Activated T-helper 1 cell treated with anti-CD3 and anti-CD28 coated beads, Interleukin-12 subunit alpha, Interleukin-12 subunit beta, Interleukin-2, Interleukin-4 antibody, amounts not matched to agents 30 ng/mL and 10 ng/mL and 1 ng/mL, durations not matched to agents 14 hours and 24 hours and 36 hours (primary cell): ENCODE measurements at regions of chr17 and their contacts with region 1.

Region 1: DNA sequence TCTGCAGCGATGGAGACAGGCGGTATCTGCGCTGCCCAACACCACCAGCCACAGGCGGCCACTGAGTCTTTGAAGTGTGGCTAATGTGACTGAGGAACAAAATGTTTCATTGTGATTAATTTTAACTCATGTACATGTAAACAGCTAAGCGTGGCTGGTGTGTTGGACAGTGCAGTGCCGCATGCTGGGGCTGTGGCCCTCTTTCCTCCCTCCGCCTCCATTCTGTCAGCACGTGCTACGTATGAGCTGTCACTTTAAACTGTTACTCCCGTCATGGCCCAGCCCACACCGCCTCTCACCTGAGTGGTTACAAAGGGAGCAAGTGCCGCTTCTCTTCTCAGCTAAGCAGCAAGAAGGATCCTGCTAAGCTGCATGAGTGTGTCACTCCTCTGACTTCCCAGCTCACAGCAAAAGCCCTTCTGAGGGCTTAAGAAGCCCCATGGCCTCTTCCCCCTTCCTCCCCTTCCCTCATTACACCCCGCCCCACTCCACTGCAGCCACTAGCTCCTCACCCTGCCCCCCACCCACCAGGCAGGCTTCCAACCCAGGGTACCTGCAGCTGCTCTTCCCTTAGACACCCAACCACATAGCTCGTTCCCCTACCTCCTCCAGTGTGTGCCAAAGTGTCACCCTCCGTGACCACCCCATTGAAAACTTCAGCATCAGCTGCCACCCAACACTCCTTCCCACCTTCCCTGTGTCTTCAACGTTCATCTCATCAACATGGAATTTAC is 15.0 kb downstream of the HASPIN start:
- DNase-seq: peak; percentile 49
- H3K4me3 Mint-ChIP-seq: peak overlapping the region; percentile 21
- H3K27ac Mint-ChIP-seq: peak overlapping the region; percentile 67
- H3K4me1 Mint-ChIP-seq: peaks cover 50% of the 10 kb centered on the region
- H3K27me3 Mint-ChIP-seq: peaks cover 2% of the 10 kb centered on the region

Region 2: DNA sequence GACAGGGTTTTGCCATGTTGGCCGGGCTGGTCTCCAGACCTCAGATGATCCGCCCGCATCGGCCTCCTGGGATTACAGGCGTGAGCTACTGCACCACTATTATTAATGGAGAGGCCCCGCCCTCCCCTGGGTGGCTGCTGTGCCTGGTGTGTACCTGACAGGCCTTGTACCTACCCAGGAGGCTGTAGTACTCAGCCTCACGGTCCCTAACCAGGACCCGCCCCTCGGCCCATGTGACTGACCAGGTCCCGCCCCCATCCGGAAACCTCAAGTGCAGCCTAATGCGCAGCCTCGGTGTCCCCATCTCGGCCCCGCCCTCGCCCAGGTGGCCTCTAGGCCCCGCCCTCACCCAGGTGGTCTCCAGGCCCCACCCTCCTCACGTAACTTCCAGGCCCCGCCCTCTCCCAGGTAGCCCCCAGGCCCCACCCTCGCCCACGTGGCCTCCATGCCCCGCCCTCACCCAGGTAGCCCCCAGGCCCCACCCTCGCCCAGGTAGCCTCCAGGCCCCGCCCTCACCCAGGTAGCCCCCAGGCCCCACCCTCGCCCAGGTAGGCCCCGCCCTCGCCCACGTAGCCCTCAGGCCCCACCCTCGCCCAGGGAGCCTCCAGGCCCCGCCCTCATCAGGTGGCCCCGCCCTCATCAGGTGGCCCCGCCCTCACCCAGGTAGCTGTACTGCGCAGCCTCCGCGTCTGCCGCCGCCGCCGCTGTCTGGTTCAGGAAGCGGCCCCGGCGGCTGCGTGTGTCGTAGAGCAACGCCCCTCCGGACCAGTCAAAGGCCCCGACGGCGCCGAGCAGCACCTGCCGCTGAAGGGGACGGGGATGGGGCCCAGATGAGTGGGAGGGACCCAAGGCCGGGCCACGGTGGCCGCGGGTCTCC is 16.0 kb after region 1 on chr17:
- intact Hi-C with region 1: loop called (anchors 2 kb)
- DNase-seq: peak; percentile 40
- H3K4me3 Mint-ChIP-seq: no peak overlapping the region
- H3K27ac Mint-ChIP-seq: no peak overlapping the region
- H3K4me1 Mint-ChIP-seq: peaks cover 21% of the 10 kb centered on the region
- H3K27me3 Mint-ChIP-seq: peaks cover 3% of the 10 kb centered on the region

Region 3: DNA sequence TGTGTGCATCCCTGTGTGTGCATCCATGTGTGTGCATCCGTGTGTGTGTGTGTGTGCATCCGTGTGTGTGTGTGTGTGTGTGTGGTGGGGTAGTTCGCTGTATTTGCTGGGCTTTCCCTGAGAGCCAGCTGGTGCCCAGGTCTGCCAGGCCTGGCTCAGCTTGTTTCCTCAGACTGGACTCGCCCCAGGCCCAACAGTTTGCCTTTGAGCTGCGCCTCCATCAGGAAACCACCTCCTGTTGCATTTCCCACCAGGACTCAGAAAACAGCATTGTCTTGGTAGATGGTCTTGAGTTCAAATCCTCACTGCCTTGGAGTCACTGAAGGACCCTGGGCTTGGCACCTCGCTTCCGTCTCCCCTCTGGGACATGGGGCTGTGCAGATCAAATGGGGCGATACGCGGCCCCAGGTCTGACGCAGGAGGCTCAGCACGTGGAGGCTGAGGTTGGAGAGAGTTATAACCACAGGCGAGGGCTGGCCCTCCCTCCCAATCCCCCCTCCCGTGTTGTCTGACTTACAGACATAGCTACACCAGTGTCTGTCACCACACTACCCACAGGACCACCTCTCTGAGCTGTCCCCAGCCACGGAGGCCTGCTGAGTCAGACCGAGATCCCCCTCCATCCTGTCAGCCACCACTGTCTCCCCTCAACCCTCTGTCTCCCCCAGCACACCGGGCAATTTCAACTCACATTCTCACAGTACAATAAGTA is 57.5 kb after region 1 on chr17:
- intact Hi-C with region 1: loop called (anchors 1 kb)
- DNase-seq: peak; percentile 48
- H3K4me3 Mint-ChIP-seq: no peak overlapping the region
- H3K27ac Mint-ChIP-seq: peak overlapping the region; percentile 9
- H3K4me1 Mint-ChIP-seq: peaks cover 32% of the 10 kb centered on the region
- H3K27me3 Mint-ChIP-seq: no peaks in the 10 kb centered on the region

Region 4: DNA sequence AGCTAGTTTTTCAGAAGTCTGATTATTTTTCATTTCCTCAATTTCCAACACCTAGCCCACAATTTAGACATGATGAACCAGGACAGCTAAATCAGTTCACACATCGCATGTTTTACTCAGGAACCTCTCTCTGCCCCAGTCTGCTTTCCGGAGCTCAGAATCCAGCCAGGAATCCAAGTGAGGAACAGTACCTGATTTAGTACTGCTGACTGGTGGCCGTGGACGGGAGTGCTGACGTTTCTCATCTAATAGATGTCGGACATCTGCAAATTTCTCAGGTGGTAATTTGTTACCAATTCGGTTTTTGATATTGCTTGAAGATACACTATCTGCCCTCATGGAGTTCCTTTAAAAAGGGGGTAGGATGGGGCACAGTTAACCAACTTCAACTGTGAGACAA is 77.2 kb after region 1 on chr17:
- intact Hi-C with region 1: no loop called
- DNase-seq: no peak
- H3K4me3 Mint-ChIP-seq: no peak overlapping the region
- H3K27ac Mint-ChIP-seq: no peak overlapping the region
- H3K4me1 Mint-ChIP-seq: no peaks in the 10 kb centered on the region
- H3K27me3 Mint-ChIP-seq: no peaks in the 10 kb centered on the region

Region 5: DNA sequence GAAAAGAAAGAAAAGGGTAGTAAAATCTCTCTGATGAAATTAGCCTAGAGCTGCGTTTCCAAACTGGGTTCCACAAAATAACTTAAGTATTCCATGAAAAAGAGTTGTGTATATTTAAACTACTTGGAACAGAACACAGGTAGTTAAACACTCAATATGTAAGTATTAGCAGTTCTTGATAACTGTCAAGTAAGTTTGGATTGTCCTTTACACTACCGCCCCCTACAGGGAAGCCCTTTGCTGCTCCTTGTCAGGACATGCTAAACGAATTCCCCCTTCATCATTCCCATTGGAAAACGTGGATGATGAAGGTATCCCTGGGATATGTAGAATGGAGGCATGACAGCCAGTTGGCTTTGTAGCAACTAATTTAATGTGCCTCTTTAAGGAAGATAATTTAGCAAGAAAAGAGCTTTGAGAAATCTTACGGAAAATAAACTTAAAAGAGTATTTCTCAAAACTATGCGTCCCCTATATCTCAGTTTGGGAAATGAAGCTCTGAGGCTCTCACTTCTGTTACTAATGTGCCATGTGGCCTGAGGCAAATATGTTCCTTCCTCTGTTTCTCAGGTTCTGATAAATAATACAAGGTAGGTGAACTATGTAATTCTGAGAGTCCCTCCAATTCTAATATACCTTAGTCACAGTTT is 88.5 kb after region 1 on chr17:
- intact Hi-C with region 1: loop called (anchors 1 kb)
- DNase-seq: peak; percentile 54
- H3K4me3 Mint-ChIP-seq: no peak overlapping the region
- H3K27ac Mint-ChIP-seq: peak overlapping the region; percentile 19
- H3K4me1 Mint-ChIP-seq: peaks cover 14% of the 10 kb centered on the region
- H3K27me3 Mint-ChIP-seq: no peaks in the 10 kb centered on the region

Region 6: DNA sequence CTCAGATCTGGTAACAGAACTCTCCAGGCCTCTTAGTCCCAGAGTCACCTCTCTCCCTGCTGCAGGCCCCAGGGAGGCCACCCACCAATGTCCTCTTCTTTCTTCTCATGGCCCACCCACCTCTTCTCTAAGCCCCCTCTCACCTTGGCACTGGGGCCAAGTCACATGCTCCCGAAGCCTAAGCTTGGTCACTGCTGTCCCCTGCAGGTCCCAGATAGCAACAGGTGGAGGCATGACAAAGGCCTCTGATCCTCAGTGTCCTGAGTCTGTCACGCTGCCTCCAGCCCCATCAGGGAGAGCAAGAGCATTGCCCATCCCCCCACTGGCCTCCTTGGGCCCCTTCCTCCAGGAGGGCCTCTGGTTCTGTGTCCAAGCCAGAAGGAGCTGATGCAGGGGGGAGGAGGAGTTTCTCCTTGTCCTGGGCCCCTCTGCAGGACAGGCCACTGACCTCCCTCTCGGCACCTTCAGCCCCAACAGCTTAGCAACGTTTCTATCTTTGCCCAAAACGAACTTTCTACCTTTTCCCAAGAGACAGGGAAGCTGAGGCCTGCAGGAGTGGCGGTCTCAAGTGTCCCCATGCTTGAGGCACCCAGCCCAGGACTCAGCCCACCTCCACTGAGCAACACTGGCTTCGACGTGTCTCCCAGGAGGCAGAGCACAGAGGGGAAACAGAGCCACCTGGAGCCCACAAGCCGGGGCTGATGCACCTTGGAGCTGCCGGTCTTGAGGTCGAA is 168.9 kb after region 1 on chr17:
- intact Hi-C with region 1: no loop called
- DNase-seq: no peak
- H3K4me3 Mint-ChIP-seq: no peak overlapping the region
- H3K27ac Mint-ChIP-seq: no peak overlapping the region
- H3K4me1 Mint-ChIP-seq: peaks cover 16% of the 10 kb centered on the region
- H3K27me3 Mint-ChIP-seq: peaks cover 7% of the 10 kb centered on the region